ENCODE measurements at regions of chr9 and their contacts with region 1.

Region 1: DNA sequence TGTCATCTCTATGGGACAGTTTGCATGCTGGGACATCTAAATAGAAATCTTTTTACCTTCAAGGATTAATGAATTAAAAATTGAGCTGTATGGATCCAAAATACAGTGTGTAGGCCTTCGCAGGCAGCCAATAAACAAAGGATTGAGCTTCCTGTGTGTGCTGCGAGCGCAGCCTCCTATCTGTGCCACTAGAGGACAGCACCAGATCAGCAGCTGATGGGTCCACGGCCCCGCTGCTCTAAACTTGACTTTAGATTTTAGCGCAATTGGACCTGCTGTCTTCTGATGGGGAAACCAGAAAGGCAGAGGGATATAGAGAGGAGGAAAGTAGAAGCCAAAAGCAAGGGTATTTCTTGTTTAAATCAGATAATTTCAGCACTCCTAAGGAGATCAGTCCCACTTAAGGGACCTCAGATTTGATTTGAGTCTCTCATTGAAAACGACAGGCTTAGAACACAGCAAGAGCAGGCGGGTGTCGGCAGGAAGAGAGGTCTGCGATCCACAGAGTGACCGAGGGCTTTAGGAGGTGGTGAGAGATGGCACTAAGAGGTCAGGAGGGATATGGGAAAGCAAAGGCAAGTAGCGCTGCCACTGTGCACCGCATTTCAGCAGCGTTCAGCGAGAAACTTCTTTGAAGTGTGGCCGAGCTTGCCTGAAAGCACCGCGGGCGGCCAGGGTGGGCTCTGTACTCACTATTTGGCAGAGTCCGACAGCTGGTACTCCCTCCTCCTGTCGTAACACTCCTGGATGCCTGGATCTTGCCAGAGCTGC is 214.3 kb downstream of the GNA14 start:
- DNase-seq: peak; percentile 74
- ATAC-seq: peak; percentile 97
- H3K4me3 ChIP-seq: no peak overlapping the region
- H3K27ac ChIP-seq: no peak overlapping the region
- H3K4me1 ChIP-seq: no peaks in the 10 kb centered on the region
- H3K27me3 ChIP-seq: no peaks in the 10 kb centered on the region
- CTCF ChIP-seq: peak; percentile 99
- POLR2A ChIP-seq: peak; percentile 48; the same call in 1 of the 2 replicates
- RAD21 ChIP-seq: peak; percentile 99

Region 2: GRCh38 chr9:77307166-77307565 is 126.7 kb before region 1 on chr9:
- CTCF ChIA-PET with region 1: no interaction called
- POLR2A ChIA-PET with region 1: no interaction called
- dilution Hi-C with region 1: no loop called
- in situ Hi-C with region 1: no loop called
- intact Hi-C with region 1: no loop called
- DNase-seq: no peak
- ATAC-seq: no peak
- H3K4me3 ChIP-seq: no peak overlapping the region
- H3K27ac ChIP-seq: peak overlapping the region; percentile 37; the same call in 1 of the 2 replicates
- H3K4me1 ChIP-seq: peaks cover 6% of the 10 kb centered on the region
- H3K27me3 ChIP-seq: no peaks in the 10 kb centered on the region
- CTCF ChIP-seq: no peak
- POLR2A ChIP-seq: no peak
- RAD21 ChIP-seq: no peak

Region 3: DNA sequence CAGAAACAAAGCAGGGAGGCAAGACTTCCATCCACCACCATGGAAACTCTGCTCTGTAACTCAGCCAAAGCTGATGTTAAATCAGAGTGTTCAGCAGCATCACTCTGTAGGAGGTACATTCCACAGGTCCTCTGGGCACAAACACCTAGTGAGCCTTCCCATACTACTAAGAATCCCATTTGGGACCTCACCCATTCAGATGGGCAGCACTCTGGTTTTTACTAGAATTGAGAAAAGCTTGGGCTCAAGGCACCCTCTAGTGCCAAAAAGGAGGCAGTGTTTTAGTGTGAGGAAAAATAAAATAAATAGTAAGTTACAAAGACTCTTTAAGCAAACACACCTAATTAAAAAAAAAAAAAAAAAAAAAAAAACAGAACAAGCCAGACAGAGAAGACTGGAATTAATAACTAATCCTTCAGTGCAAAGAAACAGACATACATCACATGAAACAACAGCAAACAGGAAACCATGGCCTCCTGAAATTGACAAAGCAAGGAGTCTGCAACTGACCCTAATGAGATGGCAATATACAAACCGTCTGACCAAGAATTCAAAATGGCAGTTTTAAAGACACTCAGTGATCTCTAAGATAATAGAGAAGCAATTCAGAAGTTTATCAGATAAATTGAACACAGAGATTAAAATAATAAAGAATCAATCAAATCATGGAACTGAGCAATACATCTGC is 54.7 kb after region 1 on chr9:
- CTCF ChIA-PET with region 1: no interaction called
- POLR2A ChIA-PET with region 1: no interaction called
- dilution Hi-C with region 1: no loop called
- in situ Hi-C with region 1: no loop called
- intact Hi-C with region 1: loop called (anchors 5 kb)
- DNase-seq: peak; percentile 20
- ATAC-seq: peak; percentile 68
- H3K4me3 ChIP-seq: no peak overlapping the region
- H3K27ac ChIP-seq: no peak overlapping the region
- H3K4me1 ChIP-seq: no peaks in the 10 kb centered on the region
- H3K27me3 ChIP-seq: no peaks in the 10 kb centered on the region
- CTCF ChIP-seq: peak; percentile 61
- POLR2A ChIP-seq: no peak
- RAD21 ChIP-seq: peak; percentile 64

Region 4: DNA sequence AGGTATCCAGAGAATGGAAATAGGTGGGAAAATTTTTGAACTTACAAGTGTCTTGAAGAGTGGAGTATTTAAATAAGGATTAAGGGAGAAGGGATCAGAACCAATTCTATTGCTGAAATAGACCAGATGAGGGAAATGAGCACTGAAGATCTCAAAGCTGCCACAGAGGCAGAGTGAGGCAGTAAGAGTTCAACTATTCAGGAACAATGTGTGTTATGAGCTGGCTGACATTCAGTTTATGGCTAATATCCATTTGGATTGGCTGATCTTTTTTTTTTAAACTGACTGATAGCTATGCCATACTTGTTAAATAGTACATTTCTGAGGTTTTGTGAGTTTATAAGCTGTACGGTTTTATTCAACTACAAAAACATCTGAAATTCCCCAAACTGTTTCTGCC is 309.5 kb after region 1 on chr9:
- CTCF ChIA-PET with region 1: interaction called, 4 read pairs
- POLR2A ChIA-PET with region 1: no interaction called
- dilution Hi-C with region 1: no loop called
- in situ Hi-C with region 1: loop called (anchors 5 kb)
- intact Hi-C with region 1: no loop called
- DNase-seq: peak; percentile 75
- ATAC-seq: peak; percentile 82
- H3K4me3 ChIP-seq: no peak overlapping the region
- H3K27ac ChIP-seq: peak overlapping the region; percentile 29; the same call in 1 of the 2 replicates
- H3K4me1 ChIP-seq: peaks cover 8% of the 10 kb centered on the region
- H3K27me3 ChIP-seq: no peaks in the 10 kb centered on the region
- CTCF ChIP-seq: no peak
- POLR2A ChIP-seq: no peak
- RAD21 ChIP-seq: no peak

Region 5: DNA sequence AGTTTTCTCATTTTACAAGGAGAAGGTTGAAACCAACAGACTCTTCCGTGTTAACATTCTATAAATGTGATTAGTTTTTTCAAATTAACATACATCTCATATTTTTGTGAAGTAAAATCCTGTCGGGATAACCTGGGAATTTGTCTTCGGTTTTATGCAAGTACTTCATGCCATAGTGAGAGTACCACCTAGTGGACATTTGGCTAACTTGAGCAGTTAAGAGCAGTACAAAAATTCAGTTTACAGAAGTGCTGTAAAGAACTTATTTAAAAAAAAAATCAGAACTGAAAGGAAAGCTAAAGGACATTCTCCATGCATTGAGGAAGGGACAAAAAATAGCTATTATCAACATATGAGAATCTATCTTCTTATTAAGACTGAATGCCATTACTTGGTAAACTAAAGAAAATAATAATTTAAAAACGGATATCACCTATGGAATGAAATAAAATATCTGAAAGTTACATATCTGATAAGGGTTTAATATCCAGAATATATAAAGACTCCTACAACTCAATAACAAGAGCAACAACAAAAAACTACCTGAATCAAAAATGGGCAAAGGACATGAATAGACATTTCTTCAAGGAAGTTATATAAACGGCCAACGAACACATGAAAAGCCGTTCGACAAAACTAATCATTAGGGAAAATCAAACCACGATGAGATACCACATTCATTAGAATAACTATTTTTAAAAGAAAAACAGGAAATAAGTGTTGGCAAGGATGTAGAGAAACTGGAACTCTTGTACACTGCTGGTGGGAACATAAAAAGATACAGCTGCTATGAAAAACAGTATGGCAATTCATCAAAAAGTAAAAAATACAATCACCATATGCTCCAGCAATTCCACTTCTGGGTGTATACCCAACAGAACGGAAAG is 331.3 kb after region 1 on chr9:
- CTCF ChIA-PET with region 1: interaction called, 4 read pairs
- POLR2A ChIA-PET with region 1: no interaction called
- dilution Hi-C with region 1: no loop called
- in situ Hi-C with region 1: no loop called
- intact Hi-C with region 1: loop called (anchors 1 kb)
- DNase-seq: peak; percentile 80
- ATAC-seq: peak; percentile 59; the same call in 1 of the 2 replicates
- H3K4me3 ChIP-seq: no peak overlapping the region
- H3K27ac ChIP-seq: no peak overlapping the region
- H3K4me1 ChIP-seq: no peaks in the 10 kb centered on the region
- H3K27me3 ChIP-seq: no peaks in the 10 kb centered on the region
- CTCF ChIP-seq: peak; percentile 63
- POLR2A ChIP-seq: no peak
- RAD21 ChIP-seq: peak; percentile 63

Region 6: DNA sequence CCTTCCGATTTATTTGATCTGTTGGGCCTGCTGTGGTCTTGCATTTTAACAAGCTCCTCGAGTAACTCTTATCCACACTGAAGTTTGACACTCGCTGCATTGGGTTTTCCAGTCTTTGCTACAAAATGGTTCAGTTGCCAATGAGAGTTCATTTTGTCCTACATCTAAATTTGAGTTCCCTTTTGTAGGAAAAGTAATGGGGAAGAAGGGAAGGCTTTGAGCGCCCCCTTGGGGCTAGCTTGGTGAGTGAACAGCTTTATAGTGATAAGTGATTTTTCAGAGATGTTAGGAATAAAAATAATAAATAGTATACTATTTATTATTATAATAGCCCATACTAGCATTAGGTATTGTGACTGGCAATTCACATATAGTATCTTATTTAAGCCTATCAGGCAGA is 687.6 kb after region 1 on chr9:
- CTCF ChIA-PET with region 1: no interaction called
- POLR2A ChIA-PET with region 1: no interaction called
- dilution Hi-C with region 1: no loop called
- in situ Hi-C with region 1: no loop called
- intact Hi-C with region 1: loop called (anchors 2 kb)
- DNase-seq: peak; percentile 58
- ATAC-seq: peak; percentile 70; the same call in 1 of the 2 replicates
- H3K4me3 ChIP-seq: no peak overlapping the region
- H3K27ac ChIP-seq: no peak overlapping the region
- H3K4me1 ChIP-seq: no peaks in the 10 kb centered on the region
- H3K27me3 ChIP-seq: peaks cover 6% of the 10 kb centered on the region
- CTCF ChIP-seq: peak; percentile 79
- POLR2A ChIP-seq: no peak
- RAD21 ChIP-seq: peak; percentile 81

Measured in IMR-90 (cell line).